HepG2 (cell line): ENCODE measurements at regions of chr9 and their contacts with region 1.

Region 1: DNA sequence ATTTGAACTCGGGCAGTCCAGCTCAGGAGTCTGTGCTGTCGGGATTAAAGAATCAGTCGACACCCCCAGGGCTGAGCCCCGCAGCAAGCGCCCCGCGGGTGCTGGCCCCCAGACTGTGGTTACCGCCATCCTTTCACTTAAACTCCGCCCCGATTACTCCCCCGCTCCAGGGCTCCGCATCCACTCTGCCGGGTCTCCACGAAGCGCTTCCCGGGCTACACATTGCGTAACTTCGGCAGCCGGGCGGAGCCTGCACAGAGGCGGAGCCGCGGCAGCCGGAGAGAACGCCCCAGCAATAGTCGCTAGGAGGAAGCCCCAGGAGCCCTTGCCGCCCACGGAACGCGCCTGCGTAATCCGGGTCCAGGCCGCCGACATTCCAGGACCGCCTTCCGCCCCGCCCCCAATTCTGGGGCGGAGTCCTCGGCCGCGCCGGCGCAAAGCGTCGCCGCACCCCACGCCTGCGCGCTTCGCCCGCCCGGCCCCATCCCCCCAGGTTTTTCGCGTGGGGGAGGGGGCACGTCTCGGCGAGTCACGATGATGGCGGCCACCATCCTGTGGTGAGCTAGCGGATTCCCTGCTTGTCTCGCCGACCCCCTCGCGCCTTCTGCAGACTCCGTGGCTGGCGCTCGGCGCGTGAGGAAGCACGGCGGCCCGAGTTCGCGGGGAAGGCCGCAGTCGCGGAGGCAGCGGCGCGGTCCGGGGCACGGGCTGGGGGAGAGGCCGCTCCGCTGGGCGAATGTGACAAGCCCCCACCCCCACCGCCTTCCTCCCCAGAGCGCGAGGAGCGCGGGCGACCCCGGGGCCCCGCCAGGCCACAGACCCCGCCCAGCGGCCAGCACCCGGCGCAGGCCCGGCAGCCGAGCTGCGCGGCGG is at the start of gene RAD23B:
- DNase-seq: peak; percentile 94
- ATAC-seq: peak; percentile 93
- H3K4me3 ChIP-seq: peak within 1 kb of the TSS; percentile 82 to 94 (median 87)
- H3K27ac ChIP-seq: peak within 1 kb of the TSS; percentile 98
- H3K4me1 ChIP-seq: peaks cover 40% of the 10 kb centered on the region
- H3K27me3 ChIP-seq: no peaks in the 10 kb centered on the region; a peak in 1 of 5 replicates
- CTCF ChIP-seq: 0 out of 2 replicates have a peak, but pooled peaks have one; percentile 9
- EP300 ChIP-seq: peak in 1 of 2 experiments; percentile 13; a peak in 2 of 4 replicates
- POLR2A ChIP-seq: peak; percentile 87 to 89
- RAD21 ChIP-seq: peak; percentile 62; the same call in 1 of the 2 replicates
- total RNA-seq, gene RAD23B: 133 and 159 TPM in 2 replicates

Region 2: GRCh38 chr9:107243751-107244150 is 39.2 kb before region 1 on chr9:
- CTCF ChIA-PET with region 1: no interaction called
- POLR2A ChIA-PET with region 1: interaction called, 16 read pairs
- in situ Hi-C with region 1: no loop called
- intact Hi-C with region 1: loop called (anchors 1 kb)
- DNase-seq: peak; percentile 89
- ATAC-seq: peak; percentile 74
- H3K4me3 ChIP-seq: no peak overlapping the region
- H3K27ac ChIP-seq: peak overlapping the region; percentile 24
- H3K4me1 ChIP-seq: peaks cover 39% of the 10 kb centered on the region
- H3K27me3 ChIP-seq: no peaks in the 10 kb centered on the region; a peak in 1 of 5 replicates
- CTCF ChIP-seq: no peak
- EP300 ChIP-seq: peak; percentile 23 to 82; a peak in 3 of 4 replicates
- POLR2A ChIP-seq: no peak
- RAD21 ChIP-seq: no peak

Region 3: GRCh38 chr9:107260437-107261086 is 22.4 kb before region 1 on chr9:
- CTCF ChIA-PET with region 1: no interaction called
- POLR2A ChIA-PET with region 1: interaction called, 29 read pairs
- in situ Hi-C with region 1: no loop called
- intact Hi-C with region 1: no loop called
- DNase-seq: peak; percentile 54
- ATAC-seq: peak; percentile 94
- H3K4me3 ChIP-seq: peak overlapping the region; percentile 18 to 39 (median 27); a peak in 3 of 6 replicates
- H3K27ac ChIP-seq: peak overlapping the region; percentile 51
- H3K4me1 ChIP-seq: peaks cover 24% of the 10 kb centered on the region
- H3K27me3 ChIP-seq: no peaks in the 10 kb centered on the region
- CTCF ChIP-seq: no peak
- EP300 ChIP-seq: 0 out of 4 replicates have a peak, but pooled peaks of 1 of the 2 experiments have one; percentile 7
- POLR2A ChIP-seq: no peak
- RAD21 ChIP-seq: no peak

Region 4: GRCh38 chr9:107299437-107299836 is 16.4 kb after region 1 on chr9:
- CTCF ChIA-PET with region 1: no interaction called
- POLR2A ChIA-PET with region 1: interaction called, 7 read pairs
- in situ Hi-C with region 1: no loop called
- intact Hi-C with region 1: loop called (anchors 2 kb)
- DNase-seq: no peak
- ATAC-seq: no peak
- H3K4me3 ChIP-seq: no peak overlapping the region
- H3K27ac ChIP-seq: no peak overlapping the region
- H3K4me1 ChIP-seq: peaks cover 48% of the 10 kb centered on the region
- H3K27me3 ChIP-seq: no peaks in the 10 kb centered on the region
- CTCF ChIP-seq: no peak
- EP300 ChIP-seq: no peak
- POLR2A ChIP-seq: no peak
- RAD21 ChIP-seq: no peak